ENCODE measurements at regions of chr6 and their contacts with region 1.

Region 1: DNA sequence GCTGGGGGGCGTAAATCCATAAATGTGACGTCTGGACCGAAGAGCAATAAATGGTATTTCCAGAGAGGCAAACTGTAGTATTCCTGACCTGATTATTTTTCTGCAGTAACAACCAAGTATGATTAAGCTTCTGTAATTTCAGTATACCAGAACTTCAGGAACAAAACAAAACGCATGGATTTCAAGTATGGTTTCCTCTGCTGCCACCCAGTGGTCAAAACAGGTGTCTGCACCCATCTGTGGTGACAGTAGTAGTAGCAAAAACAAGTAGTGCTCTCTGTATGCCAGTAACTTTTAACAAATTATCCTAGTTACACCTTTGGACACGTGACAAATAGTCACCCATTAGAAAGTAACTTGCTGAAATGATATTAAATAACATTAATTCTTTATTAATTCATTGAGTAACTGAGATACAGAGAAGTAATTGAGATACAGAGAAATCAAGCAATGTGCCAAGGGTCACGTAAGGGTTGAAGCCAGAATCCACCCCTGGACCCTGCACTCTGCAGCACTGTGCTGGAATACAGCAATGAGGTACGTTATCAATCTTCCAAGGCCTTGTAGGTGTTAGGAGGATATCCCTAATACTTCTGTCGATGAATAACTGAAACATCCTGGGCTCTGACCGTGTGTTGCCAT is 7.9 kb downstream of the CALHM4 start:
- DNase-seq: peak; percentile 39 to 82 (median 55)
- ATAC-seq: peak; percentile 85
- H3K4me3 ChIP-seq: no peak overlapping the region
- H3K4me3 Mint-ChIP-seq: no peak overlapping the region
- H3K27ac ChIP-seq: no peak overlapping the region
- H3K27ac Mint-ChIP-seq: no peak overlapping the region
- H3K4me1 ChIP-seq: peaks cover 8% of the 10 kb centered on the region
- H3K4me1 Mint-ChIP-seq: no peaks in the 10 kb centered on the region
- H3K27me3 ChIP-seq: peaks cover 0 to 14% of the 10 kb centered on the region in 2 experiments
- H3K27me3 Mint-ChIP-seq: peaks cover 10% of the 10 kb centered on the region
- CTCF ChIP-seq: peak; percentile 98

Region 2: GRCh38 chr6:116217069-116217468 is 344.4 kb before region 1 on chr6:
- CTCF ChIA-PET with region 1: interaction called, 3 read pairs
- POLR2A ChIA-PET with region 1: no interaction called
- intact Hi-C with region 1: loop called in 1 of 2 experiments (anchors 1 kb)
- DNase-seq: peak in 3 of 14 experiments; percentile 50 to 61 (median 59)
- ATAC-seq: peak; percentile 95
- H3K4me3 ChIP-seq: no peak overlapping the region
- H3K4me3 Mint-ChIP-seq: no peak overlapping the region
- H3K27ac ChIP-seq: no peak overlapping the region
- H3K27ac Mint-ChIP-seq: no peak overlapping the region
- H3K4me1 ChIP-seq: no peaks in the 10 kb centered on the region
- H3K4me1 Mint-ChIP-seq: peaks cover 7% of the 10 kb centered on the region
- H3K27me3 ChIP-seq: no peaks in the 10 kb centered on the region
- H3K27me3 Mint-ChIP-seq: no peaks in the 10 kb centered on the region
- CTCF ChIP-seq: peak; percentile 64